ENCODE measurements at regions of chr1 and their contacts with region 1.

Region 1: DNA sequence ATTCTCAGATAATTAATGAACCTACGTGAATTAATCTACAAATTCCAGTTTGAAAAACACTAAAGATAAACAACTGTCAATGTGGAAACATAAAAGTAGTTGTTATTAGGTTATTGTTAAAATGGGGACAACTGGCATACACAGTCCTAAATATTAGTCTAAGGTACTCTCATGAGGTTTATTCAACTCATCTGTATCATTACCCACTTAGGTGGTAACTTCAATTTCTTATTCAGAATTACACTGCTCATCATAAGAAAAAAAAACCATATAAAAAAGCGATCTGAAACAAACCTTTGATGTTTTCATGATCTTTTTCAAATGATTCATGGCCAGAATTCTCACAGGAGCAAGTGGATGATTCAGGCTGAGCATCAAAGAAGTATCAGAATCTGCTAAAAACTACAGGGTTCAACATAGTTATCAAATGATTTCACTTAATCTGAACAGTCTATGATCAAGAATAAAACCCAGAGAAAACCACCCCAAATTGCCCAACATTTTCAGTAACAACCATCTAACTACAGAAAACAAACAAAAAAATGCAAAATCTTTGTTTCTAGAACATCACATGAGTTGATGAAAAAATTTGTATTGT is 13.7 kb downstream of the HEATR1 start:
- DNase-seq: no peak
- ATAC-seq: peak; percentile 78
- H3K4me3 Mint-ChIP-seq: no peak overlapping the region
- H3K27ac Mint-ChIP-seq: peak overlapping the region; percentile 32
- H3K4me1 Mint-ChIP-seq: peaks cover 21% of the 10 kb centered on the region
- H3K27me3 Mint-ChIP-seq: no peaks in the 10 kb centered on the region

Region 2: GRCh38 chr1:236552901-236553300 is 37.8 kb before region 1 on chr1:
- CTCF ChIA-PET with region 1: interaction called, 3 read pairs
- POLR2A ChIA-PET with region 1: no interaction called
- intact Hi-C with region 1: loop called (anchors 5 kb)
- DNase-seq: no peak
- ATAC-seq: no peak
- H3K4me3 Mint-ChIP-seq: no peak overlapping the region
- H3K27ac Mint-ChIP-seq: no peak overlapping the region
- H3K4me1 Mint-ChIP-seq: no peaks in the 10 kb centered on the region
- H3K27me3 Mint-ChIP-seq: no peaks in the 10 kb centered on the region